ENCODE measurements at regions of chr21 and their contacts with region 1.

Region 1: GRCh38 chr21:24375201-24375600 is 1232.1 kb downstream of the MRPL39 start:
- DNase-seq: no peak
- H3K4me3 Mint-ChIP-seq: no peak overlapping the region
- H3K27ac Mint-ChIP-seq: no peak overlapping the region
- H3K4me1 Mint-ChIP-seq: peaks cover under 1% of the 10 kb centered on the region
- H3K27me3 Mint-ChIP-seq: no peaks in the 10 kb centered on the region
- CTCF ChIP-seq: no peak

Region 2: GRCh38 chr21:24514081-24514733 is 139.0 kb after region 1 on chr21:
- CTCF ChIA-PET with region 1: no interaction called
- intact Hi-C with region 1: loop called (anchors 1 kb)
- DNase-seq: no peak
- H3K4me3 Mint-ChIP-seq: no peak overlapping the region
- H3K27ac Mint-ChIP-seq: no peak overlapping the region
- H3K4me1 Mint-ChIP-seq: no peaks in the 10 kb centered on the region
- H3K27me3 Mint-ChIP-seq: no peaks in the 10 kb centered on the region
- CTCF ChIP-seq: no peak

Measured in Calu3 (cell line).